CD8-positive, alpha-beta T cell (primary cell): ENCODE measurements at regions of chr1 and their contacts with region 1.

Region 1: DNA sequence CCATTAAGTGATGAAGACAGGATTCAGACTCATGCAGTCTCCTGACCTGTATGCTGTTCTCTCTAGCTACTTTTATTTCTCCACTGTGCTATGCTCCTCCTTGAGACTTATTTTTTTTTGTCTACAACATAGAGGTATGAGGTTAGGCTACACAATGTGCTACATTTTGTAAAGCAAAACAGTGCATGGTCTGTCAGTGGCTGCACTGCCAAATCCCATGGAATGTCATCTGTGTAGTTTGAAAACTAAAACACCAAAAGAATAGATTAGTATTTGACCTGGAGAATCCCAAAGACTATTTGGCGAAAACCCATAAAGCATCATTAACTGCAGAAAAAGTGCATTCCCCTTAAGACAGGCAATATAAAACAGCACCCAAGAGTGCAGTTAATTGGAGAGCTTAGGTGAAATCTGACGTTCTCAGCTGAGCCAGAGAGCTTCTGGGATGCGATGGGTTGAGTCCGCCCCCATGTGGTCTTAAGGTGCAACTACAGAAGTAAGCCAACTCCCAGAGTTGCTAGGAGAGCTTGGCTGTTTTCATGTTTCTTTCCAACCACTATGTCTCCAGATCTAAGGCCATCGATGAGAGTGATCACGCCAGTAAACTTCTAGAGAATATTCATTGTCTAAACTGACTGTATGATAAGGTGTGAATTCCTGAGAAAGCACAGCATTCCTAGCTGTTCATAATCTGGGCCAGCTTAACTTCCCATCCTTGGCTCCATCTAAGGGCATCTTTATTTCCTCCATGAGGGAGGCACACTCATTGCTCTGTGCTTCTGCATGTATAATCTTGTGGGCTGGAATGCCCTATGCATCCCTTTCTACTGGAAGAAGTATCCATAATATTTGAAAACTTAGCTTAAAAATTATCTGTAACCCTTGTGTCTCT is 20.7 kb upstream of the CYP2J2 start:
- DNase-seq: peak; percentile 10 to 73 (median 47)
- ATAC-seq: peak; percentile 84
- H3K4me3 ChIP-seq: no peak overlapping the region
- H3K4me3 Mint-ChIP-seq: no peak overlapping the region
- H3K27ac ChIP-seq: no peak overlapping the region
- H3K27ac Mint-ChIP-seq: no peak overlapping the region
- H3K4me1 ChIP-seq: no peaks in the 10 kb centered on the region
- H3K4me1 Mint-ChIP-seq: no peaks in the 10 kb centered on the region
- H3K27me3 ChIP-seq: no peaks in the 10 kb centered on the region
- H3K27me3 Mint-ChIP-seq: peaks cover 3% of the 10 kb centered on the region
- CTCF ChIP-seq: peak; percentile 83

Region 2: GRCh38 chr1:58739856-58740466 is 1207.3 kb before region 1 on chr1:
- CTCF ChIA-PET with region 1: interaction called, 5 read pairs
- POLR2A ChIA-PET with region 1: no interaction called
- intact Hi-C with region 1: loop called in 1 of 2 experiments (anchors 5 kb)
- DNase-seq: peak in 3 of 9 experiments; percentile 35 to 76 (median 67)
- ATAC-seq: peak; percentile 49
- H3K4me3 ChIP-seq: no peak overlapping the region
- H3K4me3 Mint-ChIP-seq: no peak overlapping the region
- H3K27ac ChIP-seq: no peak overlapping the region
- H3K27ac Mint-ChIP-seq: no peak overlapping the region
- H3K4me1 ChIP-seq: no peaks in the 10 kb centered on the region
- H3K4me1 Mint-ChIP-seq: peaks cover 5% of the 10 kb centered on the region
- H3K27me3 ChIP-seq: no peaks in the 10 kb centered on the region
- H3K27me3 Mint-ChIP-seq: peaks cover 2% of the 10 kb centered on the region
- CTCF ChIP-seq: peak; percentile 98

Region 3: DNA sequence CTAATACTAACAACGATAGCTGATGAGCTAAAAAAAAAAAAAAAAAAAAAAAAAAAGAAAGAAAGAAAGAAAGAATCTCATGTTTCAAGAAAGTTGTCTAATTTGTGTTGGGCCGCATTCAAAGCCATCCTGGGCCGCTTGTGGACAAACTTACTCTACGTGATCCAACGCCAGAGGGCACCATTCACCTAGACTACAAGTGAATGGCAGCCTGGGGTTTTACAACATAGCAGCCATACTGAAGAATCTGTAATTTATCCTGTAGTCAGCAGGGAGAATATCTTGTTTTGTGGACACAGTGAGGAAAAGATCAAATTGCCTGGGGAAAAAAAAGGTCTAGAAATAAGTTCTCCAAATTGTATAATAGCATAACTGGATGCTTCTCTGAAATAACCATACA is 67.7 kb before region 1 on chr1:
- CTCF ChIA-PET with region 1: interaction called, 66 read pairs
- POLR2A ChIA-PET with region 1: no interaction called
- intact Hi-C with region 1: loop called in 1 of 2 experiments (anchors 1 kb)
- DNase-seq: peak; percentile 7 to 73 (median 54)
- ATAC-seq: peak; percentile 44
- H3K4me3 ChIP-seq: no peak overlapping the region
- H3K4me3 Mint-ChIP-seq: no peak overlapping the region
- H3K27ac ChIP-seq: no peak overlapping the region
- H3K27ac Mint-ChIP-seq: no peak overlapping the region
- H3K4me1 ChIP-seq: no peaks in the 10 kb centered on the region
- H3K4me1 Mint-ChIP-seq: peaks cover 3% of the 10 kb centered on the region
- H3K27me3 ChIP-seq: no peaks in the 10 kb centered on the region
- H3K27me3 Mint-ChIP-seq: peaks cover 6% of the 10 kb centered on the region
- CTCF ChIP-seq: peak; percentile 33

Region 4: DNA sequence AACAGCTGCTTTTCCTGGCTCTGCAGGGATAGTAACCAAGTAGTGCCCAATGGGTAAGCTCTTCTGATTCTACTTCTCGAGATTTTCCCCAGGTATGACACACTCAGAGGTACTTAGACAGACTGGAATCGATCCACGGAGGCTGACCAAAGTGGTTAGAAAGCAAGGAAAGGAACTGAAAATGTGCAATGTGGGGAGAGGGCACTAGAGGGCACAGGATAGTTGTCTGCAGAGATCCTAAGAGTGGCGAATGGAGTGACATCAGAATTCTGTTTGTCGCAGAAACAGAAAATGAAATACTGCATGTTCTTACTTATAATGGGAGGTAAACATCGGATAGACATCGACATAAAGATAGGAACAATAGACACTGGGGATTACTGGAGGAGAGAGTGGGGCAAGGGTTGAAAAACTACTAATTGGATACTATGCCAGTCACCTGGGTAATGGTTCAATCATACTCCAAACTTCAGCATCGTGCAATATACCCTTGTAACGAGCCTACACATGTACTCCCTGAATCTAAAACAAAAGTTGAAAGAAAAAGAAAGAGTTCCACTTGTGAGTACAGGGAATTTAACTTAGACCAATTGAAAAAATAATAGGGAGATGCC is 44.0 kb before region 1 on chr1:
- CTCF ChIA-PET with region 1: interaction called, 18 read pairs
- POLR2A ChIA-PET with region 1: no interaction called
- intact Hi-C with region 1: loop called in 1 of 2 experiments (anchors 1 kb)
- DNase-seq: peak in 2 of 9 experiments; percentile 19 to 32
- ATAC-seq: no peak
- H3K4me3 ChIP-seq: no peak overlapping the region
- H3K4me3 Mint-ChIP-seq: no peak overlapping the region
- H3K27ac ChIP-seq: no peak overlapping the region
- H3K27ac Mint-ChIP-seq: no peak overlapping the region
- H3K4me1 ChIP-seq: no peaks in the 10 kb centered on the region
- H3K4me1 Mint-ChIP-seq: peaks cover 4% of the 10 kb centered on the region
- H3K27me3 ChIP-seq: no peaks in the 10 kb centered on the region
- H3K27me3 Mint-ChIP-seq: no peaks in the 10 kb centered on the region
- CTCF ChIP-seq: no peak

Region 5: GRCh38 chr1:59986516-59987310 is 39.4 kb after region 1 on chr1:
- CTCF ChIA-PET with region 1: no interaction called
- POLR2A ChIA-PET with region 1: no interaction called
- intact Hi-C with region 1: loop called in 1 of 2 experiments (anchors 1 kb)
- DNase-seq: no peak
- ATAC-seq: no peak
- H3K4me3 ChIP-seq: no peak overlapping the region
- H3K4me3 Mint-ChIP-seq: no peak overlapping the region
- H3K27ac ChIP-seq: no peak overlapping the region
- H3K27ac Mint-ChIP-seq: no peak overlapping the region
- H3K4me1 ChIP-seq: no peaks in the 10 kb centered on the region
- H3K4me1 Mint-ChIP-seq: no peaks in the 10 kb centered on the region
- H3K27me3 ChIP-seq: no peaks in the 10 kb centered on the region
- H3K27me3 Mint-ChIP-seq: peaks cover 8% of the 10 kb centered on the region
- CTCF ChIP-seq: no peak

Region 6: DNA sequence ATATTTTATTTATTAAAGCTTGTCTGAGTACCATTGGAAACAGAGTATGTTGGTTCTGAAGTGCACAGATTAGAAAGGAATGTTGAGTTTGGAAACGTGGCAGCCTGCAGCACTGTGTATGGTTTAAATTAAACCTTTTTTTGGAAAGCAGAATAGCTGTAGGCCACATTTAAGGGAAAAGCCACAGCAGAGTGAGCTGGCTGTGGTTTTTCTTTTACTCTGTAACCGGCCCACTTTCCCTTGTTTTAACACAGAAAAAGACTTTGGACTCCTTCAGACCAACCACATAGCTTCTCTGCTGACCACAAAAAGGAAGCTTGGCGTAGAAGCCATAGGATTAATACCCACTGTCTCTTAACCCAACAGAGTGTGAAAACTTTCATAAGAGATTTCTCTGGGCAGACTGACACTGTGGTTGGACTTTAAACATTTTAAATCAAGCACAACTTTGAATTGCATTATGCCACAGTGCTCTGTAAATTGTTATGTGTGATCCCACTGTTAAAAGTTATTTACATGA is 1210.2 kb after region 1 on chr1:
- CTCF ChIA-PET with region 1: no interaction called
- POLR2A ChIA-PET with region 1: no interaction called
- intact Hi-C with region 1: no loop called
- DNase-seq: peak in 1 of 9 experiments; percentile 4
- ATAC-seq: no peak
- H3K4me3 ChIP-seq: no peak overlapping the region
- H3K4me3 Mint-ChIP-seq: no peak overlapping the region
- H3K27ac ChIP-seq: no peak overlapping the region
- H3K27ac Mint-ChIP-seq: no peak overlapping the region
- H3K4me1 ChIP-seq: peaks cover 14% of the 10 kb centered on the region
- H3K4me1 Mint-ChIP-seq: peaks cover 21% of the 10 kb centered on the region
- H3K27me3 ChIP-seq: no peaks in the 10 kb centered on the region
- H3K27me3 Mint-ChIP-seq: no peaks in the 10 kb centered on the region
- CTCF ChIP-seq: no peak